ENCODE measurements at regions of chr1 and their contacts with region 1.

Region 1: GRCh38 chr1:154386643-154387352 is 18.3 kb upstream of the IL6R start:
- DNase-seq: peak; percentile 32
- H3K4me3 Mint-ChIP-seq: peak overlapping the region; percentile 57
- H3K27ac Mint-ChIP-seq: peak overlapping the region; percentile 91
- H3K4me1 Mint-ChIP-seq: peaks cover 22% of the 10 kb centered on the region
- H3K27me3 Mint-ChIP-seq: no peaks in the 10 kb centered on the region

Region 2: DNA sequence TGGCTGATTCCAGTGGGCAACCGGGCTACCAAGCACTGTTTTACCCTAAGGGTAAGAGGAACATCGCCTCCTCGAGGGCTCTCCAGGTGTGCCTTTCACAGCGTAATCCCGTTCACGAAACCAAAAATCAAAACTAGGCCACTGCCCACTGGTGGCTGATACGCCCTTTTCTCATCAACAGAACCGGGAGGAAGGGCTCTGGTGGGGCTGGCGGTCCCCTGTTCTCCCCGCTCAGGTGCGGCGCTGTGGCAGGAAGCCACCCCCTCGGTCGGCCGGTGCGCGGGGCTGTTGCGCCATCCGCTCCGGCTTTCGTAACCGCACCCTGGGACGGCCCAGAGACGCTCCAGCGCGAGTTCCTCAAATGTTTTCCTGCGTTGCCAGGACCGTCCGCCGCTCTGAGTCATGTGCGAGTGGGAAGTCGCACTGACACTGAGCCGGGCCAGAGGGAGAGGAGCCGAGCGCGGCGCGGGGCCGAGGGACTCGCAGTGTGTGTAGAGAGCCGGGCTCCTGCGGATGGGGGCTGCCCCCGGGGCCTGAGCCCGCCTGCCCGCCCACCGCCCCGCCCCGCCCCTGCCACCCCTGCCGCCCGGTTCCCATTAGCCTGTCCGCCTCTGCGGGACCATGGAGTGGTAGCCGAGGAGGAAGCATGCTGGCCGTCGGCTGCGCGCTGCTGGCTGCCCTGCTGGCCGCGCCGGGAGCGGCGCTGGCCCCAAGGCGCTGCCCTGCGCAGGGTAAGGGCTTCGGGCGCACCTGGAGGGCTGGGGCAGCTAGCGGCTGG is 18.4 kb after region 1 on chr1 and contains the start of gene IL6R:
- intact Hi-C with region 1: loop called (anchors 1 kb)
- DNase-seq: peak; percentile 48
- H3K4me3 Mint-ChIP-seq: peak within 1 kb of the TSS; percentile 73
- H3K27ac Mint-ChIP-seq: peak within 1 kb of the TSS; percentile 64
- H3K4me1 Mint-ChIP-seq: peaks cover 66% of the 10 kb centered on the region
- H3K27me3 Mint-ChIP-seq: peaks cover 6% of the 10 kb centered on the region
- total RNA-seq, gene IL6R: 1.6 and 2.2 TPM in 2 replicates

Region 3: GRCh38 chr1:154747740-154748404 is 361.1 kb after region 1 on chr1:
- intact Hi-C with region 1: no loop called
- DNase-seq: peak; percentile 58
- H3K4me3 Mint-ChIP-seq: peak overlapping the region; percentile 83
- H3K27ac Mint-ChIP-seq: peak overlapping the region; percentile 91
- H3K4me1 Mint-ChIP-seq: peaks cover 73% of the 10 kb centered on the region
- H3K27me3 Mint-ChIP-seq: no peaks in the 10 kb centered on the region